ENCODE measurements at regions of chr14 and their contacts with region 1.

Region 1: GRCh38 chr14:49892636-49893308 is at the start of gene ARF6:
- DNase-seq: peak; percentile 85 to 98 (median 89)
- ATAC-seq: peak; percentile 93
- H3K4me3 ChIP-seq: peak within 1 kb of the TSS; percentile 68
- H3K4me3 Mint-ChIP-seq: peak within 1 kb of the TSS; percentile 95 to 100 (median 98)
- H3K27ac ChIP-seq: peak within 1 kb of the TSS; percentile 97
- H3K27ac Mint-ChIP-seq: peak within 1 kb of the TSS; percentile 98 to 100 (median 99)
- H3K4me1 ChIP-seq: peaks cover 10 to 18% of the 10 kb centered on the region in 2 donors
- H3K4me1 Mint-ChIP-seq: peaks cover 21 to 42% (median 40%) of the 10 kb centered on the region in 7 donors
- H3K27me3 ChIP-seq: no peaks in the 10 kb centered on the region
- H3K27me3 Mint-ChIP-seq: no peaks in the 10 kb centered on the region
- total RNA-seq, gene ARF6: 61.9 to 173 (median 77.6) TPM

Region 2: GRCh38 chr14:49767562-49768300 is 125.0 kb before region 1 on chr14 and contains the start of gene KLHDC2:
- CTCF ChIA-PET with region 1: no interaction called
- POLR2A ChIA-PET with region 1: interaction called, 3 read pairs
- intact Hi-C with region 1: loop called in 1 of 2 experiments (anchors 2 kb)
- DNase-seq: peak; percentile 84 to 94 (median 89)
- ATAC-seq: peak; percentile 88
- H3K4me3 ChIP-seq: peak within 1 kb of the TSS; percentile 62
- H3K4me3 Mint-ChIP-seq: peak within 1 kb of the TSS; percentile 95 to 99 (median 98)
- H3K27ac ChIP-seq: peak within 1 kb of the TSS; percentile 96
- H3K27ac Mint-ChIP-seq: peak within 1 kb of the TSS; percentile 98 to 100 (median 99)
- H3K4me1 ChIP-seq: peaks cover 26 to 27% of the 10 kb centered on the region in 2 donors
- H3K4me1 Mint-ChIP-seq: peaks cover 20 to 46% (median 40%) of the 10 kb centered on the region in 7 donors
- H3K27me3 ChIP-seq: no peaks in the 10 kb centered on the region
- H3K27me3 Mint-ChIP-seq: peaks cover 0 to 2% (median 0%) of the 10 kb centered on the region in 5 donors
- total RNA-seq, gene KLHDC2: 33.2 to 105 (median 84.7) TPM

Region 3: GRCh38 chr14:49908432-49908781 is 15.6 kb after region 1 on chr14:
- CTCF ChIA-PET with region 1: interaction called, 3 read pairs
- POLR2A ChIA-PET with region 1: interaction called, 11 read pairs
- intact Hi-C with region 1: no loop called
- DNase-seq: no peak
- ATAC-seq: no peak
- H3K4me3 ChIP-seq: no peak overlapping the region
- H3K4me3 Mint-ChIP-seq: peak overlapping the region in 1 of 10 donors; percentile 30
- H3K27ac ChIP-seq: no peak overlapping the region
- H3K27ac Mint-ChIP-seq: peak overlapping the region in 1 of 9 donors; percentile 46
- H3K4me1 ChIP-seq: peaks cover 0 to 14% of the 10 kb centered on the region in 2 donors
- H3K4me1 Mint-ChIP-seq: peaks cover 8 to 44% (median 24%) of the 10 kb centered on the region in 7 donors
- H3K27me3 ChIP-seq: no peaks in the 10 kb centered on the region
- H3K27me3 Mint-ChIP-seq: no peaks in the 10 kb centered on the region

Region 4: GRCh38 chr14:49977126-49977841 is 84.5 kb after region 1 on chr14:
- CTCF ChIA-PET with region 1: interaction called, 3 read pairs
- POLR2A ChIA-PET with region 1: interaction called, 62 read pairs
- intact Hi-C with region 1: loop called in 1 of 2 experiments (anchors 1 kb)
- DNase-seq: peak in 8 of 9 donors; percentile 33 to 77 (median 64)
- ATAC-seq: peak; percentile 87
- H3K4me3 ChIP-seq: peak overlapping the region; percentile 58
- H3K4me3 Mint-ChIP-seq: peak overlapping the region; percentile 64 to 85 (median 80)
- H3K27ac ChIP-seq: peak overlapping the region; percentile 71
- H3K27ac Mint-ChIP-seq: peak overlapping the region; percentile 88 to 99 (median 97)
- H3K4me1 ChIP-seq: peaks cover 44 to 76% of the 10 kb centered on the region in 2 donors
- H3K4me1 Mint-ChIP-seq: peaks cover 58 to 99% (median 85%) of the 10 kb centered on the region in 7 donors
- H3K27me3 ChIP-seq: no peaks in the 10 kb centered on the region
- H3K27me3 Mint-ChIP-seq: no peaks in the 10 kb centered on the region

Region 5: GRCh38 chr14:50060871-50061663 is 168.3 kb after region 1 on chr14:
- CTCF ChIA-PET with region 1: interaction called, 3 read pairs
- POLR2A ChIA-PET with region 1: interaction called, 35 read pairs
- intact Hi-C with region 1: loop called (anchors 1 kb)
- DNase-seq: peak in 2 of 9 donors; percentile 27 to 61
- ATAC-seq: no peak
- H3K4me3 ChIP-seq: peak overlapping the region; percentile 53
- H3K4me3 Mint-ChIP-seq: peak overlapping the region; percentile 74 to 94 (median 89)
- H3K27ac ChIP-seq: peak overlapping the region; percentile 79
- H3K27ac Mint-ChIP-seq: peak overlapping the region; percentile 96 to 100 (median 99)
- H3K4me1 ChIP-seq: peaks cover 61 to 69% of the 10 kb centered on the region in 2 donors
- H3K4me1 Mint-ChIP-seq: peaks cover 70 to 93% (median 89%) of the 10 kb centered on the region in 7 donors
- H3K27me3 ChIP-seq: no peaks in the 10 kb centered on the region
- H3K27me3 Mint-ChIP-seq: no peaks in the 10 kb centered on the region

Region 6: GRCh38 chr14:50109342-50109741 is 216.6 kb after region 1 on chr14:
- CTCF ChIA-PET with region 1: no interaction called
- POLR2A ChIA-PET with region 1: interaction called, 11 read pairs
- intact Hi-C with region 1: loop called (anchors 1 kb)
- DNase-seq: no peak
- ATAC-seq: no peak
- H3K4me3 ChIP-seq: no peak overlapping the region
- H3K4me3 Mint-ChIP-seq: no peak overlapping the region
- H3K27ac ChIP-seq: no peak overlapping the region
- H3K27ac Mint-ChIP-seq: no peak overlapping the region
- H3K4me1 ChIP-seq: peaks cover under 1 to 4% of the 10 kb centered on the region in 2 donors
- H3K4me1 Mint-ChIP-seq: peaks cover 0 to 21% (median 16%) of the 10 kb centered on the region in 7 donors
- H3K27me3 ChIP-seq: no peaks in the 10 kb centered on the region
- H3K27me3 Mint-ChIP-seq: no peaks in the 10 kb centered on the region

Region 7: GRCh38 chr14:50191499-50191898 is 298.7 kb after region 1 on chr14:
- CTCF ChIA-PET with region 1: no interaction called
- POLR2A ChIA-PET with region 1: no interaction called
- intact Hi-C with region 1: no loop called
- DNase-seq: no peak
- ATAC-seq: no peak
- H3K4me3 ChIP-seq: no peak overlapping the region
- H3K4me3 Mint-ChIP-seq: no peak overlapping the region
- H3K27ac ChIP-seq: no peak overlapping the region
- H3K27ac Mint-ChIP-seq: no peak overlapping the region
- H3K4me1 ChIP-seq: no peaks in the 10 kb centered on the region
- H3K4me1 Mint-ChIP-seq: peaks cover 0 to 9% (median 5%) of the 10 kb centered on the region in 7 donors
- H3K27me3 ChIP-seq: no peaks in the 10 kb centered on the region
- H3K27me3 Mint-ChIP-seq: no peaks in the 10 kb centered on the region